Psoas muscle (tissue), 8 donors: ENCODE measurements at regions of chr1 and their contacts with region 1.

Region 1: DNA sequence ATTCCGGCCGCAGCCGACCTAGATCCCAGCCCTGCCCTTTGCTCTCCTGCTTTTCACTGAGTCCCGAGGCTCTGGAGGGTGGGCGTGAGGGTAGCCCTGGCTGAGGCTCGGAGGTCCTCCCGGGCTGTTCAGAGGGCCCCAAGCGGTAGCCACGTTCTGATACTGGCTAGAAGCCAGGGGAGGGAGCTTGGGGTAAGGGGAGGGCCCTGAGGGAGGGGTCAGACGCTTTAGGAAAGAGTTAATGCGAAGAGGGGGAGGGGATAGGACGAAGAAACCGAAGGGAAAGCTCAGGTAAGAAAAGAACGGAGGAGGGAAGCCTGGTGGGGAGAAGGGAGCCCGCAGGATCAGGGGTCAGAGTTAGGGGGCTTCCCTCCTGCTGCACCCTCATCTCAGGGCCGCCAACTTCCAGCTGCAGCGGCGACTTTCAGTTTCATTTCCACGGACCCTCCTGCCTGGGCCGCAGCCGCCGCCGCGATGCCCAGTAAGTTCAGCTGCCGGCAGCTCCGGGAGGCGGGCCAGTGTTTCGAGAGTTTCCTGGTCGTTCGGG is at the start of gene MOV10:
- DNase-seq: peak; percentile 75 to 81
- ATAC-seq: peak; percentile 61 to 79 (median 65)
- H3K4me3 ChIP-seq: peak within 1 kb of the TSS; percentile 83
- H3K27ac ChIP-seq: peak within 1 kb of the TSS; percentile 76
- H3K4me1 ChIP-seq: peaks cover 7% of the 10 kb centered on the region
- H3K27me3 ChIP-seq: no peaks in the 10 kb centered on the region
- CTCF ChIP-seq: no peak
- total RNA-seq, gene MOV10: 5.3 to 10.6 (median 8.3) TPM

Region 2: GRCh38 chr1:112625696-112626095 is 48.8 kb before region 1 on chr1:
- intact Hi-C with region 1: loop called in 1 of 2 experiments (anchors 2 kb)
- DNase-seq: no peak
- ATAC-seq: peak in 3 of 4 donors; percentile 28 to 71 (median 65)
- H3K4me3 ChIP-seq: no peak overlapping the region
- H3K27ac ChIP-seq: peak overlapping the region; percentile 96
- H3K4me1 ChIP-seq: peaks cover 85% of the 10 kb centered on the region
- H3K27me3 ChIP-seq: no peaks in the 10 kb centered on the region
- CTCF ChIP-seq: no peak

Region 3: GRCh38 chr1:112637254-112638116 is 37.0 kb before region 1 on chr1:
- intact Hi-C with region 1: no loop called
- DNase-seq: no peak
- ATAC-seq: peak in 2 of 4 donors; percentile 53 to 61
- H3K4me3 ChIP-seq: no peak overlapping the region
- H3K27ac ChIP-seq: peak overlapping the region; percentile 33
- H3K4me1 ChIP-seq: peaks cover 47% of the 10 kb centered on the region
- H3K27me3 ChIP-seq: no peaks in the 10 kb centered on the region
- CTCF ChIP-seq: no peak

Region 4: DNA sequence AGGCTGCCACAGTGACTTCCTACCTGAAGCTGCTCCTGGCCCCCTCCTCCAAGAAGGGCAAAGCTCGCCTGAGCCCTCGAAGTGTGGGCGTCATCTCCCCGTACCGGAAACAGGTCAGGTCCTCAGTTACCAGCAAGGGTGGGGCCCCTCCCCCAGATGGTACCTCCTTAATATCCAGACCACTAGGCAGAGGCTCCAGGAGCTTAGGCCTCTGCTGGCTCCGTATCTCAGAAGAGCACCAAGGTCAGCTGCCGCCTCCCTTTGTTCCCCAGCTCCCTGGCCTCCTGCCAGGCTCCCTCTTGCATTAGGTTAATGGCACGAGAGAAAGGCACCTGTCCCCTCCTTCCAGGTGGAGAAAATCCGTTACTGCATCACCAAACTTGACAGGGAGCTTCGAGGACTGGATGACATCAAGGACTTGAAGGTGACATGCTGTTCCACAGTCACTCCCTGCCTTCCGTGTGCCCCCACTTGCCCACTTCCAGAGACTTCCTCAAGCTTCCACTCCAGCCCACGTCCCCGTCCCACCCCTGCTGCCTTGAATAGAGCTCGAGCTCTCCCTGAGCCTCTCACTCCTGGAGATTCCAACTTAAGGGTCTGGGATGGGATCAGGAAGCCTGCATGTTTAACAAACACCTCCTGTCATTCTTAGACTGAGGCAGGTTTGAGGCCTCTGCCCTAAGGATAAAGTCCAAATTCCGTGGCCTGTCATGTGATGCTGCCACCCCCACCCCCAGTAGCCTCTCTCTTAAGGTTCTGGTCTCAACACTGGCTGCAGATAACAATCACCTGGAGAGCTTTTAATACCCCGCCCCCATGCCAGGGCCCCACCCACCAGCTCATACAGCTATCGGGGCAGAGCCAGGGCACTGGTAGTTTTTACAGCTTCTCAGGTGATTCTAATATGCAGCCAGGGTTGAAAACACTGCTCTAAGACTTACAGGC is 24.1 kb after region 1 on chr1:
- intact Hi-C with region 1: loop called in 1 of 2 experiments (anchors 2 kb)
- DNase-seq: no peak
- ATAC-seq: no peak
- H3K4me3 ChIP-seq: no peak overlapping the region
- H3K27ac ChIP-seq: peak overlapping the region; percentile 82
- H3K4me1 ChIP-seq: peaks cover 35% of the 10 kb centered on the region
- H3K27me3 ChIP-seq: no peaks in the 10 kb centered on the region
- CTCF ChIP-seq: no peak

Region 5: GRCh38 chr1:112706908-112707663 is 32.6 kb after region 1 on chr1 and contains the start of gene RHOC:
- intact Hi-C with region 1: loop called (anchors 2 to 5 kb)
- DNase-seq: peak; percentile 89 to 93
- ATAC-seq: peak; percentile 84 to 91 (median 90)
- H3K4me3 ChIP-seq: peak within 1 kb of the TSS; percentile 83
- H3K27ac ChIP-seq: peak within 1 kb of the TSS; percentile 83
- H3K4me1 ChIP-seq: peaks cover 22% of the 10 kb centered on the region
- H3K27me3 ChIP-seq: no peaks in the 10 kb centered on the region
- CTCF ChIP-seq: peak; percentile 90
- total RNA-seq, gene RHOC: 43.5 to 88.3 (median 75.5) TPM

Region 6: GRCh38 chr1:113291777-113292602 is 617.5 kb after region 1 on chr1:
- intact Hi-C with region 1: no loop called
- DNase-seq: no peak
- ATAC-seq: no peak
- H3K4me3 ChIP-seq: no peak overlapping the region
- H3K27ac ChIP-seq: no peak overlapping the region
- H3K4me1 ChIP-seq: no peaks in the 10 kb centered on the region
- H3K27me3 ChIP-seq: peaks cover 0 to 11% (median 0%) of the 10 kb centered on the region in 3 donors
- CTCF ChIP-seq: no peak